Panc1 (cell line): ENCODE measurements at regions of chr14 and their contacts with region 1.

Region 1: DNA sequence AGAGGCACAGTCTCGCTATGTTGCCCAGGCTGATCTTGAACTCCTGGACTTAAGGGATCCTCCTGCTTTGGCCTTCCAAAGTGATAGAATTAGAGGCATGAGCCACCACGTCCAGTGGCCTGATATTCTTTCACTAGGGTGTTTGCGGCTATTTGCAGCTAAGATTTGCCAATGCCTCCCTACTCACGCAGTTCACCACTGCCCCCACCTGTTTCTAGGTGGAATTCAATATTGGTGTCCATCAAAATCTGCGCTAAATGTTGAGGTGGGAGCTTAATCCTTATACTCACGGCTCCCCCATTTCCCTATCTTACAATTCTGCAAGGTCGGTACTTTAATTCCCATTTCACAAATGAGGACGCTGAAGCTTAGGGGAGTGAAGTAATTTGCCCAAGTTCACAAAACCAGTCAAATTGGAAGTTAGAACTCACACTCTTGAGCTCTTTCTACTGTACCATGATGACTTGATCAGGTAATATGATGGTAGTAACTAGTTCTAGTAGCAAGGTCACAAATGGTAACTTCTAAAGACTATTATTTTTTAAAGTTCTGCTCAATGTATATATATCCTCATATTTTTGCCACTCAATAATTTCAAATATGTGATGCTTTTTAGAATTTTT is 22.1 kb upstream of the LRRC9 start:
- DNase-seq: no peak
- ATAC-seq: no peak
- H3K4me3 ChIP-seq: no peak overlapping the region
- H3K27ac ChIP-seq: no peak overlapping the region
- H3K4me1 ChIP-seq: no peaks in the 10 kb centered on the region
- H3K27me3 ChIP-seq: no peaks in the 10 kb centered on the region
- CTCF ChIP-seq: peak; percentile 65

Region 2: GRCh38 chr14:59632381-59632780 is 265.5 kb before region 1 on chr14:
- CTCF ChIA-PET with region 1: interaction called, 6 read pairs
- POLR2A ChIA-PET with region 1: no interaction called
- in situ Hi-C with region 1: no loop called
- intact Hi-C with region 1: loop called (anchors 5 kb)
- DNase-seq: no peak
- ATAC-seq: peak; percentile 60; the same call in 1 of the 2 replicates
- H3K4me3 ChIP-seq: no peak overlapping the region
- H3K27ac ChIP-seq: no peak overlapping the region
- H3K4me1 ChIP-seq: no peaks in the 10 kb centered on the region
- H3K27me3 ChIP-seq: peaks cover 16% of the 10 kb centered on the region
- CTCF ChIP-seq: peak; percentile 69

Region 3: GRCh38 chr14:59711080-59711479 is 186.8 kb before region 1 on chr14:
- CTCF ChIA-PET with region 1: no interaction called
- POLR2A ChIA-PET with region 1: no interaction called
- in situ Hi-C with region 1: no loop called
- intact Hi-C with region 1: loop called (anchors 10 kb)
- DNase-seq: no peak
- ATAC-seq: no peak
- H3K4me3 ChIP-seq: no peak overlapping the region
- H3K27ac ChIP-seq: no peak overlapping the region
- H3K4me1 ChIP-seq: no peaks in the 10 kb centered on the region
- H3K27me3 ChIP-seq: no peaks in the 10 kb centered on the region; the same call in 1 of the 2 replicates
- CTCF ChIP-seq: no peak

Region 4: GRCh38 chr14:59803052-59803540 is 94.8 kb before region 1 on chr14:
- CTCF ChIA-PET with region 1: no interaction called
- POLR2A ChIA-PET with region 1: no interaction called
- in situ Hi-C with region 1: no loop called
- intact Hi-C with region 1: no loop called
- DNase-seq: no peak
- ATAC-seq: no peak
- H3K4me3 ChIP-seq: no peak overlapping the region
- H3K27ac ChIP-seq: no peak overlapping the region
- H3K4me1 ChIP-seq: no peaks in the 10 kb centered on the region
- H3K27me3 ChIP-seq: no peaks in the 10 kb centered on the region
- CTCF ChIP-seq: no peak

Region 5: GRCh38 chr14:59882957-59883356 is 14.9 kb before region 1 on chr14:
- CTCF ChIA-PET with region 1: no interaction called
- POLR2A ChIA-PET with region 1: no interaction called
- in situ Hi-C with region 1: no loop called
- intact Hi-C with region 1: no loop called
- DNase-seq: no peak
- ATAC-seq: no peak
- H3K4me3 ChIP-seq: no peak overlapping the region
- H3K27ac ChIP-seq: no peak overlapping the region
- H3K4me1 ChIP-seq: no peaks in the 10 kb centered on the region
- H3K27me3 ChIP-seq: no peaks in the 10 kb centered on the region
- CTCF ChIP-seq: peak; percentile 25; the same call in 1 of the 2 replicates